ENCODE measurements at regions of chr7 and their contacts with region 1.

Region 1: GRCh38 chr7:27143023-27143949 is at the start of gene HOXA5:
- DNase-seq: no peak
- ATAC-seq: peak; percentile 79 to 81
- H3K4me3 ChIP-seq: peak within 1 kb of the TSS; percentile 70
- H3K27ac ChIP-seq: peak within 1 kb of the TSS; percentile 95
- H3K4me1 ChIP-seq: peaks cover 18% of the 10 kb centered on the region
- H3K27me3 ChIP-seq: peaks cover 68% of the 10 kb centered on the region
- CTCF ChIP-seq: peak; percentile 85
- total RNA-seq, gene HOXA5: 16.0 TPM

Region 2: DNA sequence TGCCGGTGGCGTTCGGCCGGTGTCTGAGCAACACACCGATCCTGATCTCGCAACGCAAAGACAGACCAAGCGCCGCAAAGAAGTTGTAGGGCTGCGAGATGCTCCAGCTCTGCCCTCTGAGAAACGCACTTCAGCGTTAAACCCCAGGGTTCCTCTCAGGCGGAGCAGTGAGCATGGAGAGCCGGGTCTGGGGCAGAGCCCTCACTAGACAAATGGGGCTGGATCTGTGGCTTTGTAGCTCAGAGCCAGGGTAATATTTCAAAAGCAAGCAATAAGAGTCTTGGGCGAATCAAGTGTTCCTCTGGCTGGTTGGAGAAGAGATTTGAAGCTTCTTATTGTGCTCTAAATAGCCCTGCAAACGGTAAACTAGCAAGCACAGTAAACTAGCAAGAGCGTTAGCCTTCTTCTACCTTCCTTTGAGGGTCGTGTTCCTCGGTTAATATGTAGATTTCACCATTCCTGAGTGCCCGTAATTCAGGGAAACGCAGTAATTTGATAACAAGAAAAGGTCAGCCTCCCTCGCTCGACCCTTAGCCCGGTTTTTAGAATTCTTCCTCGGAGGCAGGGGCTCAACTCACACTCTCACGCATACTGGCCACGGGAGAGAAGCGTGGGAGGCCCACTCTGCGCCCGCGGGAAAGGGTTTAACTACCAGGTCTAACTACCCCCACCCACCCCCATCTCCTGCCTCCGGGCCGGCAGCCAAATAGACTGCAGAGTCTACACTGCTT is 285.6 kb before region 1 on chr7:
- intact Hi-C with region 1: loop called (anchors 5 kb)
- DNase-seq: peak; percentile 50
- ATAC-seq: peak; percentile 47 to 59
- H3K4me3 ChIP-seq: peak overlapping the region; percentile 44
- H3K27ac ChIP-seq: peak overlapping the region; percentile 85
- H3K4me1 ChIP-seq: peaks cover 48% of the 10 kb centered on the region
- H3K27me3 ChIP-seq: no peaks in the 10 kb centered on the region
- CTCF ChIP-seq: no peak

Region 3: DNA sequence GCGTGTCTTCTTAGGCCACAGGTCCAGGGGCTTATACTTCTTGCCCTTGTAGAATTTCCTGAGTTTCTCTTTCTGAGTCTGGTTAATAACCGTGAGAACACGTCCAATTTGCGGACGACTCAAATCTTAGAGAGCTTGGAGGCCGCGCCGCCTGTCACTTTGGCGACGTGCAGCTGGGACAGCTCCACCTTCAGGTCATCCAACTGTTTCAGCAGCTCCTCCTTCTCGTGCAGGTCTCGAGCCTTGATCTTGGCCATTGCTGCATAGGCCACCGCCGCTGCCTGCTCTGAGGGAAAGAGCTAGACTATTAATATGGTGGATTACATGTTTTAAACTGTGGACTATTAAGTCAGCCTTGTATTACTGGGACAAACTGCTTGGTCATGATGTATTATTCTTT is 126.2 kb after region 1 on chr7:
- intact Hi-C with region 1: no loop called
- DNase-seq: no peak
- ATAC-seq: no peak
- H3K4me3 ChIP-seq: no peak overlapping the region
- H3K27ac ChIP-seq: no peak overlapping the region
- H3K4me1 ChIP-seq: no peaks in the 10 kb centered on the region
- H3K27me3 ChIP-seq: no peaks in the 10 kb centered on the region
- CTCF ChIP-seq: no peak

Measured in lower lobe of right lung (tissue), 2 donors.